ENCODE measurements at regions of chr17 and their contacts with region 1.

Region 1: GRCh38 chr17:20121359-20122253 is 112.4 kb downstream of the SPECC1 start:
- DNase-seq: peak; percentile 68 to 82
- ATAC-seq: peak; percentile 89 to 90
- H3K4me3 ChIP-seq: no peak overlapping the region
- H3K27ac ChIP-seq: peak overlapping the region; percentile 34 to 68; a peak in 3 of 6 replicates
- H3K4me1 ChIP-seq: peaks cover 10% of the 10 kb centered on the region
- CTCF ChIP-seq: peak; percentile 99
- EP300 ChIP-seq: no peak
- POLR2A ChIP-seq: no peak
- RAD21 ChIP-seq: peak; percentile 98 to 99

Region 2: GRCh38 chr17:19977311-19978208 is 144.0 kb before region 1 on chr17 and contains the start of gene AKAP10:
- CTCF ChIA-PET with region 1: interaction called, 11 read pairs
- POLR2A ChIA-PET with region 1: no interaction called
- DNase-seq: peak; percentile 89 to 90
- ATAC-seq: peak; percentile 94 to 96
- H3K4me3 ChIP-seq: peak within 1 kb of the TSS; percentile 76
- H3K27ac ChIP-seq: peak within 1 kb of the TSS; percentile 85 to 93
- H3K4me1 ChIP-seq: peaks cover 18% of the 10 kb centered on the region
- CTCF ChIP-seq: no peak
- EP300 ChIP-seq: no peak
- POLR2A ChIP-seq: peak; percentile 58
- RAD21 ChIP-seq: peak in 1 of 2 experiments; percentile 25; a peak in 1 of 5 replicates
- polyA plus RNA-seq, gene AKAP10: 51.1 and 52.9 TPM in 2 replicates

Region 3: DNA sequence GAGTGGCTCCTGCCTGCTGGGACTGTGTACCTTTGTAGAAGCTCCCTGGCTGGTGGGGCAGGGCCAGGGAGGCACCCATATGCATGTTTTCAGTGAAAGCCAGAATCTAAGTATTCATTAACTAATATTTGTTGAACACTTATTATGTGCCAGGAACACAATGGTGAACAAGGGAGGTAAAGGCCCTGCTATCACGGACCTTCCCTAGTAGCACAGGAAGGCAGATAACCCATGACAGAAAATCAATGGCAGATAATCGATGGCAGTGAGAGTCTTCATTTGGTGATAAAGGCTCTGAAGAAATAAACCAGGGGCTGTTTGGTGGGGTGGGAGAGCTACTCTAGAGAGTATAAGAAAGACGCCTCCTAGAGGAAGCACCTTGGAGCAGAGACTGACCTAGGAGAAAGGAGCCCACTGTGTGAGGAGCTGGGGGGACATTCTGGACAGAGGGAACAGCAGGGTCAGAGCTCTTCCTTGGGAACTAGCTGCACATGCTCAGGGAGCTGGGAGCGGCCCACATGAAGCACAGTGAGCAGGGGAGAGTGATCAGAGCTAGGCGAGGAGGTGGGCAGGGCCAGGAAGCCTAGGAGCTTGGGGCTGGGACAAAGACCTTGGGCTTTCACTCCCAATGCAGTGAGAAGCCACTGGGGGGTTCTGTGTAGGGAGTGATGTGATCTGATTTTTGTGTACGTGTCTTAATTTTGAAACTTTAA is 33.9 kb before region 1 on chr17:
- CTCF ChIA-PET with region 1: interaction called, 10 read pairs
- POLR2A ChIA-PET with region 1: no interaction called
- DNase-seq: no peak
- ATAC-seq: no peak; a peak in 1 of 6 replicates
- H3K4me3 ChIP-seq: no peak overlapping the region
- H3K27ac ChIP-seq: no peak overlapping the region
- H3K4me1 ChIP-seq: peaks cover 13% of the 10 kb centered on the region; the same call in 1 of the 3 replicates
- CTCF ChIP-seq: no peak
- EP300 ChIP-seq: no peak
- POLR2A ChIP-seq: no peak
- RAD21 ChIP-seq: no peak

Region 4: DNA sequence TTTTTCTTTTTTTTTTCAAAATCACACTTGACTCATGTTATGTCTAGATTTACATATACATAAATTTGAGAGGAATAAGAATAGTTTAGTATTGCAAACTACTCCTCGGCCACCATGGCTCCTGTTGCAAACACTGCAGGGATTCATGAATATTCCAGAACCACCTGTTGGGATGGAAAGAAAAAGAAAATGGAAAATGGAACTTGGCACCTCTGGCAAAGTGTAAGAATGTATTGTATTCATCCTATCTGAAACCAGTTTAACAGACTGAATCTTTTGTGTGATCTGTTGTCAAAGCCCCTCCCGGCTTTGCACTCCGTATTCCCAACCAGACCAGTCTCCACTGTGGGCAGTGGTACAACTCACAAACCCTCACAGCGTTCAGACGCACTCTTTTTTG is 11.9 kb after region 1 on chr17:
- CTCF ChIA-PET with region 1: interaction called, 24 read pairs
- POLR2A ChIA-PET with region 1: no interaction called
- DNase-seq: no peak
- ATAC-seq: no peak
- H3K4me3 ChIP-seq: no peak overlapping the region
- H3K27ac ChIP-seq: no peak overlapping the region
- H3K4me1 ChIP-seq: no peaks in the 10 kb centered on the region; the same call in 1 of the 3 replicates
- CTCF ChIP-seq: no peak
- EP300 ChIP-seq: no peak
- POLR2A ChIP-seq: no peak
- RAD21 ChIP-seq: no peak

Region 5: GRCh38 chr17:20155258-20156195 is 33.9 kb after region 1 on chr17:
- CTCF ChIA-PET with region 1: interaction called, 11 read pairs
- POLR2A ChIA-PET with region 1: no interaction called
- DNase-seq: peak; percentile 97
- ATAC-seq: peak; percentile 94 to 98
- H3K4me3 ChIP-seq: peak overlapping the region; percentile 69
- H3K27ac ChIP-seq: peak overlapping the region; percentile 81 to 91
- H3K4me1 ChIP-seq: peaks cover 25% of the 10 kb centered on the region
- CTCF ChIP-seq: no peak
- EP300 ChIP-seq: no peak
- POLR2A ChIP-seq: peak; percentile 45
- RAD21 ChIP-seq: no peak

Region 6: DNA sequence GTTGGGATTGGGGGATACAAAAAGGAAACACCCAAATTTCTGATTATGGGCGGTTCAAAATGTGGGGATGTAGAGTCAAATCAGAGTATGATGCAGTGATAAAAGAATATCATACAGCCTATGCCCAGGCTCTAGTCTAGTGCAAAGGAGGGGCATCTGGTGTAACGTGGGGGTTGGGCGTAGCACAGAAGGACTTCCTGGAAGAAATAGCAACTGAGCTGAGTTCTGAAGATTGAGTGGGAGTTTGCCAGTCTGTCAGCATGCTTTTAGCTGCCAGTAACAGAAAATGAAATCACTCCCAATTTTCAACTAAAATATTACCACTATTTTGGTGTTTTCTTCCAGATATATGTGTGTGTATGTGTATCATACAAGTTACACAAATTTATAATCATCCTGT is 84.5 kb after region 1 on chr17:
- CTCF ChIA-PET with region 1: interaction called, 15 read pairs
- POLR2A ChIA-PET with region 1: no interaction called
- DNase-seq: peak; percentile 44 to 74
- ATAC-seq: peak; percentile 83 to 87
- H3K4me3 ChIP-seq: no peak overlapping the region
- H3K27ac ChIP-seq: peak overlapping the region; percentile 88 to 92
- H3K4me1 ChIP-seq: peaks cover 75% of the 10 kb centered on the region
- CTCF ChIP-seq: no peak
- EP300 ChIP-seq: no peak
- POLR2A ChIP-seq: no peak
- RAD21 ChIP-seq: no peak

Region 7: GRCh38 chr17:20315821-20316220 is 194.2 kb after region 1 on chr17:
- CTCF ChIA-PET with region 1: interaction called, 34 read pairs
- POLR2A ChIA-PET with region 1: no interaction called
- DNase-seq: no peak
- ATAC-seq: no peak
- H3K4me3 ChIP-seq: no peak overlapping the region
- H3K27ac ChIP-seq: no peak overlapping the region
- H3K4me1 ChIP-seq: no peaks in the 10 kb centered on the region
- CTCF ChIP-seq: no peak
- EP300 ChIP-seq: no peak
- POLR2A ChIP-seq: no peak
- RAD21 ChIP-seq: no peak

Measured in A549 (cell line).